ENCODE measurements at regions of chr1 and their contacts with region 1.

Region 1: DNA sequence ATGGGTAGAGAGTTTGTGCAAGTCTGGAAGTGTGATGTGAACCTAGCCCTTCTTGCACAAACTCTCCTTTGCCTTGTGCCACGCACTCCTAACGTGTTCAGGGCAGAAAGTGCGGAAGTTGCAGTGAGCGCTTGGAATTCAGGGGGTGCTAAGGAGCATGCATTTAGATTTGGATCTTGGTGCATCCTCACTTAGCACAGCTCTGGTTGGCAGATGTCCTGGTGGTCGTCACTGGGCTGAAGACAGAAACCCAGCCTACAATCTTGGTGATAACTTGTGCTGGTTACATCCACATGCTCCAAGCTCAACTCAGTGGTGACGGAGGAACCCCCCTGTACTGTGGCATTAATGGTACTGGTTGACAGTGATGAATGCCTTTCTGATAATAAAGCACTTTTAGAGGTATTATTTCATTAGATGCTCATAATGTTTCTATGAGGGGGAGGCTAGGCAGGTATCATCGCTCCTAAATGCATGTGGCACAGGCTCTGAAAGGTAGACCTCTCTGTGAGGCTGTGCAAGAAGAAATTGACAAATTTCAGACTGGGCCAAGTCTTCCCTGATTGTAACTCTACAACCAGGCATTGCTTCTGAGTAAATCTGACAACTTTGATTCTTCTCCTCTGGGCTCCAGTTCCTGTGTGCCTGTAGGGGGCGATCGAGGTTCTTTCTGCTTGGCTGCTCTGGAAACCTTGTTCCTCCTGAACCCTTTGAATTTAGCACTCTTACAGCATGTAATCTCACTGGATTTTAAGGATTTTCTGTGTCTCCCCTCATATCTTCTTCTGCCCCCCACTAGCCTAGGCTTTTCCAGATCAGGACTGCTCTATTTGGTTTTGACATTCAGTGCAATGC is 40.6 kb downstream of the MAPKAPK2 start:
- DNase-seq: peak; percentile 78
- CTCF ChIP-seq: peak; percentile 77

Region 2: DNA sequence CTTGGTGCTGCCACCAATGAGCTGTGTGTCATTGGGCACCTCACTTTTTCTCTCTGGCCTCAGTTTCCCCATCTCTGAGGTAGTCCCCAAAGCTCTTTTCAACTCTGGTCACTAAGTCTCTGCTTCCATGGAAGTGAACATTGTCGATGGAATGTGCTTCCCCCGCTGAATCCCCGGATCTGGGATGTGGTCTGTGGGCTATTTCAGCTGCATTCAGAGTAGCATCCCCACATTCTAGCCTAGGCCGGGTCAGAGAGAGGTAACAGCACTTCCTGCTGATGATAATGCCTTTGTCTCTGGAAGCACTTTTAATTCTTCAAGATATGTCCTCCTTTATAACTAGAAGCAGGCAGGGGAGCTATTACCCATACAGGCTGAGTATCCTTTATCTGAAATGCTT is 188.2 kb before region 1 on chr1:
- in situ Hi-C with region 1: no loop called
- DNase-seq: no peak
- CTCF ChIP-seq: no peak

Region 3: GRCh38 chr1:206637605-206638004 is 87.7 kb before region 1 on chr1:
- in situ Hi-C with region 1: no loop called
- DNase-seq: no peak
- CTCF ChIP-seq: no peak

Region 4: GRCh38 chr1:206982216-206982615 is 256.9 kb after region 1 on chr1:
- in situ Hi-C with region 1: loop called (anchors 10 kb)
- DNase-seq: peak; percentile 67
- CTCF ChIP-seq: peak; percentile 82

Region 5: GRCh38 chr1:207004981-207005830 is 279.9 kb after region 1 on chr1:
- in situ Hi-C with region 1: no loop called
- DNase-seq: peak; percentile 51
- CTCF ChIP-seq: peak; percentile 91

Measured in GM13977 (cell line).